Kidney (tissue), 22 donors: ENCODE measurements at regions of chr10 and their contacts with region 1.

Region 1: DNA sequence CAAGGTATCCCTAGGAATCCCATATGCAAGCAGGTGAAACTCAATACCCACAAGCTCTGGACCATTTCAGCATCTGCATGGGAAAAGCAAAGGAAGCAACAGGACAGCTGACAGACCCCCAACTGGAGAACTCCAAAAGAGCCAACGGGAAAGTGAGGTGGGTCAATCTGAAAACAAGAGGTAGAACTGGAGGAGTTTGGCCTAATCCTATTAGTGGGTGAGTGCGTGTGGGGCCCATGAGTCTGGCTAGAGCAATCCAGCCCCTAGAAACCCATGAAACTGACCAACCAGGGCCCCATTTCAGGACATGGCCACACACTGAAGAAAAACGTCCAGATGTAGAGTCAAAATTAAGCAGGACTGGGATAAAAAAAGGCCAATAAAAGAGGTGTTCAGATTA is 26.6 kb upstream of the WNT8B start:
- DNase-seq: no peak
- H3K4me3 ChIP-seq: no peak overlapping the region
- H3K27ac ChIP-seq: no peak overlapping the region
- H3K4me1 ChIP-seq: no peaks in the 10 kb centered on the region
- H3K27me3 ChIP-seq: no peaks in the 10 kb centered on the region
- CTCF ChIP-seq: no peak

Region 2: DNA sequence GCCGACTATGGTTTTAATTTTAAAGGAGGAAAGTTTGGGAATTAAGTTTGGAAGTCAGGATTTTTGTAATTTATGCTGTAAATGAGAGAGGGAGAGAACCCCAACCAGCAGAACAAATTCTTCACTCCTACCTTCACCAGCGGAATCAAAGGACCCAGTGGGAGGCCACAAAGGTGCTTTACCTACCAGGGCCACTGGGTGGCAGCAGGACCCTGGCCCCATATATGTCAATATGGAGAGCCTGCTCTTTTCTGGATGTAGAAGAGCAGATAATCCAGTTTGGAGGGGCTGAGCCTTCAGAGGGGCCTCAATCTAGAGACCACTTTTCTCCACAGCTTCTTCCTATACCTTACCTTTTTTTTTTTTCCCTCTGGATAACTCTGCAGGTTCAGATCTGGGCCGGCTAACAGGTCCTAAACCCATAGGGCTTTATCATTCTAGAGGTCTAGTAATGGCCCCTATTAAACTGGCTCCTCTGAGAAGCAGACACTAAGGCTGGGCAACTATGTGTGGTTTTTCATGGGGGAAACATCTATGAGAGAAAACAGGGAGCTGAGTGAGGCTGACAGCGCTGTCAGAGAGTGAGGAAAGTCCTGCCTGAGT is 97.7 kb before region 1 on chr10:
- intact Hi-C with region 1: loop called (anchors 5 kb)
- DNase-seq: peak; percentile 76 to 81 (median 77)
- H3K4me3 ChIP-seq: no peak overlapping the region
- H3K27ac ChIP-seq: no peak overlapping the region
- H3K4me1 ChIP-seq: no peaks in the 10 kb centered on the region
- H3K27me3 ChIP-seq: no peaks in the 10 kb centered on the region
- CTCF ChIP-seq: peak; percentile 92

Region 3: GRCh38 chr10:100391163-100392002 is 44.9 kb before region 1 on chr10:
- intact Hi-C with region 1: no loop called
- DNase-seq: no peak
- H3K4me3 ChIP-seq: no peak overlapping the region
- H3K27ac ChIP-seq: no peak overlapping the region
- H3K4me1 ChIP-seq: no peaks in the 10 kb centered on the region
- H3K27me3 ChIP-seq: no peaks in the 10 kb centered on the region
- CTCF ChIP-seq: no peak